Endothelial cell of umbilical vein (primary cell): ENCODE measurements at regions of chr3 and their contacts with region 1.

Region 1: GRCh38 chr3:57597122-57597923 is at the start of gene ARF4:
- DNase-seq: peak; percentile 100
- H3K4me3 ChIP-seq: peak within 1 kb of the TSS; percentile 82 to 93 (median 86)
- H3K27ac ChIP-seq: peak within 1 kb of the TSS; percentile 99
- H3K4me1 ChIP-seq: peaks cover 34% of the 10 kb centered on the region
- H3K27me3 ChIP-seq: no peaks in the 10 kb centered on the region
- CTCF ChIP-seq: peak in 1 of 2 donors; percentile 41
- POLR2A ChIP-seq: peak; percentile 98
- total RNA-seq, gene ARF4: 243 and 249 TPM in 2 replicates

Region 2: GRCh38 chr3:57518266-57518915 is 78.9 kb before region 1 on chr3:
- CTCF ChIA-PET with region 1: no interaction called
- POLR2A ChIA-PET with region 1: no interaction called
- dilution Hi-C with region 1: no loop called
- intact Hi-C with region 1: loop called (anchors 2 kb)
- DNase-seq: peak; percentile 65
- H3K4me3 ChIP-seq: peak overlapping the region in 1 of 3 experiments; percentile 37
- H3K27ac ChIP-seq: peak overlapping the region; percentile 81
- H3K4me1 ChIP-seq: peaks cover 21% of the 10 kb centered on the region
- H3K27me3 ChIP-seq: no peaks in the 10 kb centered on the region
- CTCF ChIP-seq: no peak
- POLR2A ChIP-seq: no peak

Region 3: DNA sequence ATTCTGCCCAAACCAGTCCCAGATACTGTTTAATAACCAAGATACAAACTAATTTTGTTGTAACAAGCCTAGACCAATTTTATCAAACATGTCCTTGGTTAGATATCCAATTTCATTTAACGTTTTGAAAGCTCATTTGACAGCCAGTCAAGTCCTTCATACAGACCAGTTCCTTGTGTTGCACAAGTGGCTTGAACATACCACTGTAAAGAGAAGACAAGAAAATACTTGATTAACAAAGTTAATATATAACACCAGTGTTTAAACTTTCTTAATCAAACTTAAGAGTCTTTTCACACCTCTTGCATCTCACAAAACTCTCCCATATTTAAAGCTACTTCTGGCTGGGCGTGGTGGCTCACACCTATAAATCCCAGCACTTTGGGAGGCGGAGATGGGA is 25.2 kb before region 1 on chr3:
- CTCF ChIA-PET with region 1: no interaction called
- POLR2A ChIA-PET with region 1: no interaction called
- dilution Hi-C with region 1: no loop called
- intact Hi-C with region 1: no loop called
- DNase-seq: no peak
- H3K4me3 ChIP-seq: no peak overlapping the region
- H3K27ac ChIP-seq: no peak overlapping the region
- H3K4me1 ChIP-seq: peaks cover 2% of the 10 kb centered on the region
- H3K27me3 ChIP-seq: no peaks in the 10 kb centered on the region
- CTCF ChIP-seq: no peak
- POLR2A ChIP-seq: no peak

Region 4: GRCh38 chr3:57627976-57628375 is 30.7 kb after region 1 on chr3:
- CTCF ChIA-PET with region 1: interaction called, 4 read pairs
- POLR2A ChIA-PET with region 1: no interaction called
- dilution Hi-C with region 1: no loop called
- intact Hi-C with region 1: loop called (anchors 5 kb)
- DNase-seq: no peak
- H3K4me3 ChIP-seq: no peak overlapping the region
- H3K27ac ChIP-seq: no peak overlapping the region
- H3K4me1 ChIP-seq: peaks cover 13% of the 10 kb centered on the region
- H3K27me3 ChIP-seq: no peaks in the 10 kb centered on the region
- CTCF ChIP-seq: no peak
- POLR2A ChIP-seq: no peak

Region 5: DNA sequence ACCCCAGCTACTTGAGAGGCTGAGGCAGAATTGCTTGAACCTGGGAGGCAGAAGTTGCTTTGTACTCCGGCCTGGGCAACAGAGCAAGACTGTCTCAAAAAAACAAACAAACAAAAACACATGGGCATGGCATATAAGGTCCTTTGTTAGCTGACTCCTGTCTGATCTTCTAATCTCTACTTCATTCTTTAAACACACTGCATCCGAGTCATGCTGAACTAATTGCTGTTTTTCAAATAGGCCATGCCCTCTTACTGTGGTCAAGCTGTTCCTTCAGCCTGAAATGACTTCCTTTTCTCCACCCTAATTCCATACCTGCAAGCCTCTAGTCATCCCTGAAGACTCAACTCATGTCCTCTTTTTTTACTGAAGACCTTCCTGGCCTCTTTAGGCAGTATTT is 136.5 kb after region 1 on chr3:
- CTCF ChIA-PET with region 1: no interaction called
- POLR2A ChIA-PET with region 1: no interaction called
- dilution Hi-C with region 1: no loop called
- intact Hi-C with region 1: no loop called
- DNase-seq: no peak
- H3K4me3 ChIP-seq: no peak overlapping the region
- H3K27ac ChIP-seq: no peak overlapping the region
- H3K4me1 ChIP-seq: no peaks in the 10 kb centered on the region
- H3K27me3 ChIP-seq: no peaks in the 10 kb centered on the region
- CTCF ChIP-seq: no peak
- POLR2A ChIP-seq: no peak

Region 6: GRCh38 chr3:57755668-57756527 is 158.6 kb after region 1 on chr3 and contains the start of gene SLMAP:
- CTCF ChIA-PET with region 1: interaction called, 4 read pairs
- POLR2A ChIA-PET with region 1: interaction called, 7 read pairs
- dilution Hi-C with region 1: no loop called
- intact Hi-C with region 1: loop called (anchors 1 kb)
- DNase-seq: peak; percentile 94
- H3K4me3 ChIP-seq: peak within 1 kb of the TSS; percentile 73 to 97 (median 84)
- H3K27ac ChIP-seq: peak within 1 kb of the TSS; percentile 92
- H3K4me1 ChIP-seq: peaks cover 35% of the 10 kb centered on the region
- H3K27me3 ChIP-seq: no peaks in the 10 kb centered on the region
- CTCF ChIP-seq: no peak
- POLR2A ChIP-seq: peak; percentile 43
- total RNA-seq, gene SLMAP: 45.7 and 54.7 TPM in 2 replicates

Region 7: DNA sequence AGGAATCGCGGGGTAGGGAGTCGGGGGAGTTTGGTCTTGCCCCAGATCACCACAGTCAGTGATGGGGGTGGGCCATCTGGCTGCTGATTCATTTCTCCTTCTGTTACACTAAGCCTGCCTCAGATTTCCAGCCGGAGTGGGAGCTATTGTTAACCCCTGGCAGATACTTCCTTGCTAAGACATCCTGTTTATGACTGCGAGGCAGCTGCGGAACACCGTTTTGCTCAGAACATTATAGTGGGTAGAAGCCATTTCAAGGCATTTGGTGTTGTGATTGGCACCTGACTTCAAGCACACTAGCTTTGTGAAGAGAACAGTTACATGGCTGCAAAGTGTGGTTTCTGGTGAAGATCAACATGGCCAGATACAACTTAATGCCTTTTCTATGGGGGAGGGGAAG is 484.7 kb after region 1 on chr3:
- CTCF ChIA-PET with region 1: no interaction called
- POLR2A ChIA-PET with region 1: no interaction called
- dilution Hi-C with region 1: no loop called
- intact Hi-C with region 1: loop called (anchors 2 kb)
- DNase-seq: peak; percentile 99
- H3K4me3 ChIP-seq: no peak overlapping the region
- H3K27ac ChIP-seq: peak overlapping the region; percentile 93
- H3K4me1 ChIP-seq: peaks cover 62% of the 10 kb centered on the region
- H3K27me3 ChIP-seq: no peaks in the 10 kb centered on the region
- CTCF ChIP-seq: no peak
- POLR2A ChIP-seq: peak; percentile 47

Region 8: GRCh38 chr3:58332575-58333188 is 735.4 kb after region 1 on chr3 and contains the start of gene PXK:
- CTCF ChIA-PET with region 1: no interaction called
- POLR2A ChIA-PET with region 1: no interaction called
- dilution Hi-C with region 1: no loop called
- intact Hi-C with region 1: no loop called
- DNase-seq: peak; percentile 75
- H3K4me3 ChIP-seq: peak within 1 kb of the TSS; percentile 63 to 71 (median 63)
- H3K27ac ChIP-seq: peak within 1 kb of the TSS; percentile 41
- H3K4me1 ChIP-seq: peaks cover 12% of the 10 kb centered on the region
- H3K27me3 ChIP-seq: no peaks in the 10 kb centered on the region
- CTCF ChIP-seq: peak in 1 of 2 donors; percentile 32
- POLR2A ChIP-seq: no peak
- total RNA-seq, gene PXK: 11.1 and 14.6 TPM in 2 replicates